ENCODE measurements at regions of chr3 and their contacts with region 1.

Region 1: GRCh38 chr3:137105277-137105977 is 147.6 kb downstream of the IL20RB start:
- DNase-seq: peak in 1 of 2 donors; percentile 87
- H3K4me3 ChIP-seq: no peak overlapping the region
- H3K27ac ChIP-seq: no peak overlapping the region
- H3K4me1 ChIP-seq: peaks cover 0 to 5% (median 0%) of the 10 kb centered on the region in 4 donors
- H3K27me3 ChIP-seq: peaks cover 0 to 30% (median 13%) of the 10 kb centered on the region in 3 donors
- CTCF ChIP-seq: peak in 5 of 7 experiments; percentile 33 to 59 (median 47)
- EP300 ChIP-seq: no peak
- POLR2A ChIP-seq: no peak

Region 2: DNA sequence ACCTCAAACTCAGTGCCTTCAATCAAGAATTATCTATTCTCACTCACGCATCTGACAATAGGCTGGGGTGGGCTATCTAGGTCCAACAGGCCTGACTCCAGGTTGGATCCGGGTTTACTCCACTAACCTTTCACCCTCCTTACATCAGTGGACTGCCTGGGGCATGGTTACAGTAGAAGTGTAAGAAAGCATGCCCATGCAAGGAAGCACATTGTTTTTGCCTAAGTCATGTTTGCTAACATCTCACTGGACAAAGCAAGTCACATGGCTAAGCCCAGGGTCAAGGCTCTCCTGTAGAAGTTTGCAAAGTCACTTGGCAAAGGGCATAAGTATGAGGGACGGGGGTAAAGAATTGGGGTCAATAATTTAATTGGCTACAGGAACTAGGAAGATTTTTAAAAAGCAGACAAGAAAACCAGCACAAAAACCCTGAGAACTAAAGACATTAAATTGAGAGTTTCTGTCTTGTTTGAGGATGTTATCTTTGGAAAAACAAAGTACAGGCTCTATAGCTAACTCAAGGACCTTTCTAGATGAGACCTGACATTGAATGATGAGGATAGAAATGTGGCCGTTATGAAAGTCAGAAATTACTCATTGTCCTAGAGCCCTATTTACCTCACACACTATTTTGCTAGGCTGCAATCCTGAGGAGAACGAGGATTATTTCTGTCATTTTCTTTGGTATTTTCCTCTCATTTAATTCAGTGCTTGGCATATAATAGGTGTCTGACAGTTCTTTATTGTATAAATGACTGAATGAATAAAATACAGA is 66.6 kb after region 1 on chr3:
- intact Hi-C with region 1: no loop called
- DNase-seq: no peak
- H3K4me3 ChIP-seq: no peak overlapping the region
- H3K27ac ChIP-seq: no peak overlapping the region
- H3K4me1 ChIP-seq: no peaks in the 10 kb centered on the region
- H3K27me3 ChIP-seq: peaks cover 0 to 4% (median 0%) of the 10 kb centered on the region in 3 donors
- CTCF ChIP-seq: no peak
- EP300 ChIP-seq: no peak
- POLR2A ChIP-seq: no peak

Region 3: DNA sequence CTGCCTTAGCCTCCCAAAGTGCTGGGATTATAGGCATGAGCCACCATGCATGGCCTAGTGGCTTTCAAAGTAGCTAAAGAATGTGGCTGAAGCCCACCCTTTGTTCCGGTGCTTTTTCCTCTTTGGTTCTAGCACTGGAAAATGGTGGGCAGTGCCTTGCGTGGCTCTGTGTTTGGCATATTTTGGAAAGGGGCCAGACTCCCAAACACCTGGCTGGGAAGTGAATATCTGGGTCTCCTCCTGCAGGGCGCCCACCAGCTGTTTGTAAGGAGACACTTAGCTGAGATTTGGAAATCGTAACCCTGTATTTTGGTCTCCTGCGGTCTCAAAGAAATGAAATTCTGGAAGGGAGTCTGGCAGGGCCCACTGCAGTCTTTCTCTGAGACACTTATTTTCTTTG is 188.7 kb after region 1 on chr3:
- intact Hi-C with region 1: no loop called
- DNase-seq: no peak
- H3K4me3 ChIP-seq: no peak overlapping the region
- H3K27ac ChIP-seq: no peak overlapping the region
- H3K4me1 ChIP-seq: no peaks in the 10 kb centered on the region
- H3K27me3 ChIP-seq: peaks cover 0 to 12% (median 0%) of the 10 kb centered on the region in 3 donors
- CTCF ChIP-seq: no peak
- EP300 ChIP-seq: no peak
- POLR2A ChIP-seq: no peak

Region 4: DNA sequence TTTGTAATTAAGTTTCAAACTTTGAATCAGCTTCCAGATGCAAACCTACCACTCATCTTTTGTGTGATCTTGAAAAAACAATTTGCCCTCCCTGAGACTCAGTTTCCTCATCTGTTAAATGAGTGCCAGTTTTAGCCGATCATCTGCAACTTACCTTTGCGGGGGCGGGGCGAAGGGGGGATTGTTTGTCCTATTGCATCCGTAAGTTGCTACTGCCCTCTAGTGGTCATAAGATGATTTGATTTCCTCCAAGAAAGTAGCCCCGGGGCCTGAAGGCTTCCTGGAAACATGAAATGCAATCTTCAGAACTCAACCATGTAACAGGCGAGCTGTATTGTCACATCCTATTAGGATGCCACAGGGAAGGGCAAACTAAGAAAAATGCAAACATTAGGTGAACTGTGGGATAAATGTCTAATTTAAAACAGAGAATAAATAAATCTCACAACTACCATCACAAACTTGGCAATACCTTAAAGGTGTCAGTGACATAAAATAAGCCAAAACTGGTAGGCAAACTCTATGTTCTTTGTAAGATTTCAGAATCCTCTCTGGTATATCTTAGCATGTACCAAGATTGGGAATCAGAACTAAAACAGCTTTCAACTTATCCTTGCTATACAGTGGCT is 841.0 kb after region 1 on chr3:
- intact Hi-C with region 1: loop called (anchors 10 kb)
- DNase-seq: peak; percentile 65 to 83
- H3K4me3 ChIP-seq: no peak overlapping the region
- H3K27ac ChIP-seq: no peak overlapping the region
- H3K4me1 ChIP-seq: no peaks in the 10 kb centered on the region
- H3K27me3 ChIP-seq: no peaks in the 10 kb centered on the region
- CTCF ChIP-seq: peak in 5 of 7 experiments; percentile 44 to 64 (median 54)
- EP300 ChIP-seq: no peak
- POLR2A ChIP-seq: no peak

Region 5: DNA sequence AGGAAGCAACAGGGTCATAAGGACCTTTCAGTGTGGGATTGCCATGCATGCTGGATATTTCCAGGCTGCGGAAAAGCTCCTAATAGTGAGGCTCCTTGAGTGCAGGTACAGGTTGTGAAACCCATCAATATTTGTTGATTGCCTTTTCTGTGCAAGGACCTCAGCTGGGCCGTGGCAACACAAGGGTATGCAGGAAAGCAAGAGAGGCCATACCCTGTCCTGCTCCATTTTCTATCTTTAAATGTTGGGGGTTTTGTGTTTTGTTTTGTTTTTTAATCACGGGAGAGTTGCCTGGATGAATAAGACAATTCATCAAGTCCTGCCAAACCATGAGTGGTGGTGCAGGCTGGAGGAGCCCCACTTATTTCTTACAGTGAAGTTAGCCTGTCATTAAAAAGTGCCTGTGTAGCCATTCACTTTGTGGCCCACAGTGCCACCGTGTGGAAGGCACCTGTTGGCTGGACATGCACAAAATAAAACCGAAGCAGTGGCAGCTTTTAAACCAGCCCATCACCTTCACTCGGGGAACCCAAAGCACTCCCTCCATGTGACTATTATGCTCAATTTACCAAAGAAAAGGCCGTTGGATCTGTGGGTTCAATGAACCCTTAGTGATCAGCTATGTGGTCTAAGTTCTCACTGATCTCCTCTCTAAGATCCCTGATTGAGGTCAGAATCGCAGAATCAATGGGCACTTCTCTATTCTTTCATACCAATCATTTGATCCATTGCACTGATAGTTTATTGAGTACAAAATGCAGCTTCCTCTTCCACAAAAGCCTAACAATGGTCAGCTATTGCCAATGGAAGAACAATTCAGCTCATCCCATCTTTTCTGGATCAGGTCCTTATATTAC is 946.7 kb after region 1 on chr3:
- intact Hi-C with region 1: loop called (anchors 10 kb)
- DNase-seq: peak; percentile 75 to 81
- H3K4me3 ChIP-seq: no peak overlapping the region
- H3K27ac ChIP-seq: no peak overlapping the region
- H3K4me1 ChIP-seq: no peaks in the 10 kb centered on the region
- H3K27me3 ChIP-seq: no peaks in the 10 kb centered on the region
- CTCF ChIP-seq: peak in 5 of 7 experiments; percentile 47 to 75 (median 54)
- EP300 ChIP-seq: no peak
- POLR2A ChIP-seq: no peak

Measured in stomach (tissue), 19 donors.